ENCODE measurements at regions of chr5 and their contacts with region 1.

Region 1: GRCh38 chr5:82351754-82352145 is 73.6 kb upstream of the RPS23 start:
- DNase-seq: peak in 1 of 2 experiments; percentile 49
- H3K4me3 ChIP-seq: no peak overlapping the region
- H3K27ac ChIP-seq: no peak overlapping the region
- H3K4me1 ChIP-seq: no peaks in the 10 kb centered on the region
- H3K27me3 ChIP-seq: no peaks in the 10 kb centered on the region
- CTCF ChIP-seq: peak; percentile 90

Region 2: DNA sequence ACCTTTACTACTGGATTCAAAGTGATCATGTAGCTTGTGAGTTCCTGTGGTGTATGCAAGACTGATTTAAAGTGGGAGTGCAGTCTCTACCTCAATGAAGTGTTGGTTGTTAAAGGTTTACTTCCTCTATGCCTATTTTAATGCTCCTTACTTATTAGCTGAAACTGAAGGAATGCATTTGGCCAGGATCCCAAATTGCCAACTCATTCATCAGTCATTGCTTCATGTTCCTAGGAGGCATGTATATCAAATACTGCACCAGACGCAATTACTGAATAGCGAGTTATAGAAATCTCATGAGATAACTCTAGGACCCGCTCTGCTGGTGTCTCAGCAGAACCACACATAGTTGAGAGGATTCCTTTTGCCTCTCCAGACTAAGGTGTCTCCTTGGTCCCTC is 69.4 kb after region 1 on chr5:
- CTCF ChIA-PET with region 1: no interaction called
- POLR2A ChIA-PET with region 1: no interaction called
- intact Hi-C with region 1: loop called (anchors 2 kb)
- DNase-seq: peak; percentile 31 to 73
- H3K4me3 ChIP-seq: no peak overlapping the region
- H3K27ac ChIP-seq: no peak overlapping the region
- H3K4me1 ChIP-seq: 0 out of 2 replicates have a peak, but pooled peaks cover 3% of the 10 kb centered on the region
- H3K27me3 ChIP-seq: no peaks in the 10 kb centered on the region
- CTCF ChIP-seq: peak; percentile 28; the same call in 1 of the 2 replicates

Region 3: DNA sequence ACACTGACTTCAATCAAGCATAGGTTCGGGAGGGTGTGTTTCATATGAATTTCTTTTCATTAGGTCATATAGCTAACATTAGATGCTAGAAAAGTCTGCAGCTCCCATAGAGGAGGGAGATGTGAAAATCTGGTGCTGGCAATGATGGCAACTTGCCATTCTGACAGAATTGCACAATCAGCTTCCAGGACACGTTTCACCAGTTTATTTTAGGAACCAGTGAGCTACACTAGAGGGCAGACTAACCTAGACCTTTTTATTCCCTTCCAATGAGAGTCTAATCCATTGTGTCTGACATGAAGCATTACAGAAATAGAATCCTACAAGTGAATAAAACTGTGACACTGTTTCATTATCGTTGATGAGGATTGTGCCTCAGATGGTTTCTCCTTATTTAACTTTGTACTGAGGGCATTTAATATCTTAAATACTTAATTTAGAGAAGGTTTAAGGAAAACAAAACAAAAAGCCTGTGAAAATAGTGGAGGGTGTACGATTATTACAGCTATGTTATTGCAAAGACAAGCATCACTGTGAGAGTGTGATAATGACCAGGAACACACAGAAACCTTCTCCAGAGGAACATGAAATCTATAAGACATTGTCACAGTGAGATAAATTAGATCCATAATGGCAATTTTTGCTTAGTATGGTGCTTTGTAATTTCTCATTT is 289.7 kb after region 1 on chr5:
- CTCF ChIA-PET with region 1: no interaction called
- POLR2A ChIA-PET with region 1: no interaction called
- intact Hi-C with region 1: loop called (anchors 1 kb)
- DNase-seq: peak; percentile 50 to 52
- H3K4me3 ChIP-seq: no peak overlapping the region
- H3K27ac ChIP-seq: no peak overlapping the region
- H3K4me1 ChIP-seq: no peaks in the 10 kb centered on the region
- H3K27me3 ChIP-seq: no peaks in the 10 kb centered on the region
- CTCF ChIP-seq: peak; percentile 68

Region 4: GRCh38 chr5:82793808-82794419 is 442.2 kb after region 1 on chr5:
- CTCF ChIA-PET with region 1: no interaction called
- POLR2A ChIA-PET with region 1: no interaction called
- intact Hi-C with region 1: loop called (anchors 5 kb)
- DNase-seq: peak in 1 of 2 experiments; percentile 3
- H3K4me3 ChIP-seq: no peak overlapping the region
- H3K27ac ChIP-seq: no peak overlapping the region
- H3K4me1 ChIP-seq: no peaks in the 10 kb centered on the region
- H3K27me3 ChIP-seq: no peaks in the 10 kb centered on the region
- CTCF ChIP-seq: peak; percentile 78

Region 5: GRCh38 chr5:83430130-83431010 is 1078.6 kb after region 1 on chr5:
- CTCF ChIA-PET with region 1: no interaction called
- POLR2A ChIA-PET with region 1: no interaction called
- intact Hi-C with region 1: loop called (anchors 5 kb)
- DNase-seq: peak in 1 of 2 experiments; percentile 30
- H3K4me3 ChIP-seq: no peak overlapping the region
- H3K27ac ChIP-seq: no peak overlapping the region
- H3K4me1 ChIP-seq: no peaks in the 10 kb centered on the region
- H3K27me3 ChIP-seq: no peaks in the 10 kb centered on the region
- CTCF ChIP-seq: peak; percentile 82

Region 6: DNA sequence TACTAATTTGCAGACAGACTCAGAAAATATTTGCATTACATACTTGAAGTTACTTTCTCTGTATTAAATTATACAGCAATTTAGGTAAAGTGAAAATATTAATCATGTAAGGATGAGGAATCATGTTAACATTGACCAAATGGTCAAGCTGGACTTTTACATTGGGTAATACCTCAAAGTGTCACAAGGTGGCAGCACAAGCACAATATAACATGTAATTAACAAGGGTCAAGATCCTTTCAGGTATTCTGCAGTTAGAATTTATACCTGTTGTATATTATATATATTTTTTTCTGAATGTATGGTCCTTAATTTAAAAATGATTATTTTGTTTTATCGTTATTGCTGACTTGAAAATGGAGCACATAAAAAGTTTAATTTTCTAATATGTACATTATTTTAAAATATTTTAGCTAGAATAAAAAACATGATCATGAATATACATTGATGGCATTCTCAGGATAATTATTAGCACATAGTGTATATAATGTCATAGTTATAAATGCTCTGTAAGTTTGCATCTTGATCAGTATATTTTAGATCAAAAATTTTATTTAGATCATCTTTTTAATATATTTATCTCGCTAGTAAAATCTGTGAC is 1360.4 kb after region 1 on chr5:
- CTCF ChIA-PET with region 1: no interaction called
- POLR2A ChIA-PET with region 1: no interaction called
- intact Hi-C with region 1: loop called (anchors 5 kb)
- DNase-seq: peak; percentile 37 to 47
- H3K4me3 ChIP-seq: no peak overlapping the region
- H3K27ac ChIP-seq: no peak overlapping the region
- H3K4me1 ChIP-seq: no peaks in the 10 kb centered on the region
- H3K27me3 ChIP-seq: no peaks in the 10 kb centered on the region
- CTCF ChIP-seq: peak; percentile 87